Activated CD4-positive, alpha-beta T cell treated with anti-CD3 and anti-CD28 coated beads, Interleukin-2, amount 10 ng/mL, durations not matched to agents 7 days and 5 days (primary cell): ENCODE measurements at regions of chr12 and their contacts with region 1.

Region 1: DNA sequence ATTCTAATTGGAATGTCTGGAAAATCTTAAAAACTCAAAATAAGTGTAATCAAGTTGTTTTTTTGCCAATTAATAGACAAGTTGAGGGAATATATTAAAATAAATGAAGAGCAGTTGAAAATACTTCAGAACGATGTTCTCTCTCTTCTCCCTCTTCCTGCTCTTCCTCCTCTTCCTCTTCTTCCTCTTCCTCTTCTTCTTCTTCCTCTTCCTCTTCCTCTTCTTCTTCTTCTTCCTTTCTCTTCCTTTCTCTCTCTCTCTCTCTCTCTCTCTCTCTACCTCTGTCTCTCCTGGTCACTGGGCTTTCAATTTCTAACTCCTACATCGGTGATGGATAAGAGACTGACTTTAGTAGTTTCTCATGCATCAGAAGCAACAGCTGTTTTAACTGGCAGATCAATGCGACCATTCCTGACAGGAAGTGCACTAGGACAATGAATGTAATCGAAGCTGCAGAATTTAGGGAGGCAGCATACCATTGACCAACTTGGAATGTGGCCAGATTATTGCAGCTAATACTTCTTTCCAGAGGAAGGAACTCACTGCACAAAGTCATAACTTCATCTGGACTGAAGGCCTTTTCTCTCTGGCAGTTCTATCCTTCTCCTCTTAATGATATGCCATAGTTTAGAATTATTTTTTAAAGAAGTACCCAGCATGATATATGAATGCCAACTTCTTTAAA is 13.8 kb upstream of the TMTC2 start:
- DNase-seq: no peak
- H3K4me3 Mint-ChIP-seq: no peak overlapping the region
- H3K27ac Mint-ChIP-seq: no peak overlapping the region
- H3K4me1 Mint-ChIP-seq: no peaks in the 10 kb centered on the region
- H3K27me3 Mint-ChIP-seq: peaks cover 5% of the 10 kb centered on the region

Region 2: DNA sequence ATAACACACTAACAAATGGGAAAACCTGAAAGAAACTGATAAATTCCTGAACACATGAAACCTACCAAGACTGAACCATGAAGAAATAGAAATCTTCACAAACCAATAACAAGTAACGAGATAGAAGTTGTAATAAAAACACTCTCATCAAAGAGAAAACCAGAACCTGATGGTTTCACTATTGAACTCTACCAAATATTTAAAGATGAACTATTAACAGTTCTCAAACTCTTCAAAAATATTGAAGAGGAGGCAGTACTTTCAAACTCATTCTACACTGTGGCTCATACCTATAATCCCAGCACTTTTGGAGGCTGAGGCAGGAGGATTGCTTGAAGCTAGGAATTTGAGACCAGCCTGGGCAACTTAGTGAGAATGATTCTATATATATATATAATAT is 34.6 kb before region 1 on chr12:
- CTCF ChIA-PET with region 1: no interaction called
- POLR2A ChIA-PET with region 1: no interaction called
- DNase-seq: no peak
- H3K4me3 Mint-ChIP-seq: no peak overlapping the region
- H3K27ac Mint-ChIP-seq: no peak overlapping the region
- H3K4me1 Mint-ChIP-seq: no peaks in the 10 kb centered on the region
- H3K27me3 Mint-ChIP-seq: no peaks in the 10 kb centered on the region

Region 3: DNA sequence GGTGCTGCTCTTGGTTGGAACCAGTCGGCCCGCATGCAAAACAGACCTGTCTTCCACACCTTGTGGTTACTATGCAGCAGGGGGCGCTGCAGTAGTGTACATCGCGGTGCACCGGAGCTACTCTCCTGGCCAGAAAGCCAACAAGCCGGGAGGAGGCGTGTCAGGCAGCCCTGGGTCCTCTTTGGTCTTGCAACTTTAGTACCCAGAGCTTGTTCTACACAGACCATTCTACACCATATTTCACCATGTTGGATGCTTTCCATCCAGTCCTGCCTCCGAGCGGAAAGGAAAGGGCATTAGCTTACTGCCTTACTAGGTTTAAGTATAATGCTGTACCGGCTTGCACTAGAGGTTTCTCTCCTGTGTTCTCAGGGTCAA is 12.8 kb after region 1 on chr12:
- CTCF ChIA-PET with region 1: interaction called, 17 read pairs
- POLR2A ChIA-PET with region 1: no interaction called
- DNase-seq: peak; percentile 94
- H3K4me3 Mint-ChIP-seq: peak overlapping the region; percentile 92
- H3K27ac Mint-ChIP-seq: peak overlapping the region; percentile 92
- H3K4me1 Mint-ChIP-seq: peaks cover 18% of the 10 kb centered on the region
- H3K27me3 Mint-ChIP-seq: peaks cover 17% of the 10 kb centered on the region